ENCODE measurements at regions of chr15 and their contacts with region 1.

Region 1: GRCh38 chr15:34818526-34818925 is 23.2 kb upstream of the ACTC1 start:
- DNase-seq: no peak
- ATAC-seq: no peak
- H3K4me3 ChIP-seq: no peak overlapping the region
- H3K27ac ChIP-seq: no peak overlapping the region
- H3K4me1 ChIP-seq: peaks cover 0 to 4% (median 0%) of the 10 kb centered on the region in 9 donors
- H3K27me3 ChIP-seq: no peaks in the 10 kb centered on the region
- CTCF ChIP-seq: no peak

Region 2: DNA sequence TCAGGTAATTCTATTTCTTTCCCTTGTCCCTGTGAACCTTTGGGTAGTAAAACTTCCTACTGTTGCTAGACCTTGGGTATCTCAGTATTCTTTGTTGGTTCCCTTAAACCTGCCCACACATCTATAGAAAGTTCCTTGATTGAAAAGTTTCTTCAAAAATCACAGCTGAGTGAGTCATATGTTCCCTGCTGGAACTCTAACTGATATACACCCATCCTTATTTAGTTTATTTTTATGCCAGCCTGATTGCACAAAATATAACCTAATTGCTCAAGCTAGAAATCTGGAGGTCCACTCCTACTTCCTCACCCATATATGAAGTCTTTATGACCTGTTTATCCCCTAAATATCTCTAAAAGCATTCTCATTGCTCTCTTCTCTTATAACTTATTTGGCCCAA is 50.0 kb before region 1 on chr15:
- intact Hi-C with region 1: loop called in 1 of 10 experiments (anchors 10 kb)
- DNase-seq: no peak
- ATAC-seq: no peak
- H3K4me3 ChIP-seq: no peak overlapping the region
- H3K27ac ChIP-seq: no peak overlapping the region
- H3K4me1 ChIP-seq: peaks cover 0 to 24% (median 0%) of the 10 kb centered on the region in 9 donors
- H3K27me3 ChIP-seq: no peaks in the 10 kb centered on the region
- CTCF ChIP-seq: no peak

Region 3: GRCh38 chr15:34793901-34794300 is 24.6 kb before region 1 on chr15:
- intact Hi-C with region 1: no loop called
- DNase-seq: peak; percentile 30 to 44
- ATAC-seq: peak in 7 of 8 donors; percentile 10 to 61 (median 22)
- H3K4me3 ChIP-seq: peak overlapping the region; percentile 28 to 65 (median 56)
- H3K27ac ChIP-seq: peak overlapping the region; percentile 76 to 97 (median 93)
- H3K4me1 ChIP-seq: peaks cover 0 to 35% (median 13%) of the 10 kb centered on the region in 9 donors
- H3K27me3 ChIP-seq: peaks cover 0 to 61% (median 22%) of the 10 kb centered on the region in 7 donors
- CTCF ChIP-seq: no peak

Measured in heart right ventricle (tissue), 16 donors.